ENCODE measurements at regions of chr6 and their contacts with region 1.

Region 1: GRCh38 chr6:124870611-124871459 is 91.4 kb upstream of the RNF217 start:
- ATAC-seq: no peak
- H3K4me3 ChIP-seq: no peak overlapping the region
- H3K27ac ChIP-seq: no peak overlapping the region
- H3K4me1 ChIP-seq: no peaks in the 10 kb centered on the region

Region 2: DNA sequence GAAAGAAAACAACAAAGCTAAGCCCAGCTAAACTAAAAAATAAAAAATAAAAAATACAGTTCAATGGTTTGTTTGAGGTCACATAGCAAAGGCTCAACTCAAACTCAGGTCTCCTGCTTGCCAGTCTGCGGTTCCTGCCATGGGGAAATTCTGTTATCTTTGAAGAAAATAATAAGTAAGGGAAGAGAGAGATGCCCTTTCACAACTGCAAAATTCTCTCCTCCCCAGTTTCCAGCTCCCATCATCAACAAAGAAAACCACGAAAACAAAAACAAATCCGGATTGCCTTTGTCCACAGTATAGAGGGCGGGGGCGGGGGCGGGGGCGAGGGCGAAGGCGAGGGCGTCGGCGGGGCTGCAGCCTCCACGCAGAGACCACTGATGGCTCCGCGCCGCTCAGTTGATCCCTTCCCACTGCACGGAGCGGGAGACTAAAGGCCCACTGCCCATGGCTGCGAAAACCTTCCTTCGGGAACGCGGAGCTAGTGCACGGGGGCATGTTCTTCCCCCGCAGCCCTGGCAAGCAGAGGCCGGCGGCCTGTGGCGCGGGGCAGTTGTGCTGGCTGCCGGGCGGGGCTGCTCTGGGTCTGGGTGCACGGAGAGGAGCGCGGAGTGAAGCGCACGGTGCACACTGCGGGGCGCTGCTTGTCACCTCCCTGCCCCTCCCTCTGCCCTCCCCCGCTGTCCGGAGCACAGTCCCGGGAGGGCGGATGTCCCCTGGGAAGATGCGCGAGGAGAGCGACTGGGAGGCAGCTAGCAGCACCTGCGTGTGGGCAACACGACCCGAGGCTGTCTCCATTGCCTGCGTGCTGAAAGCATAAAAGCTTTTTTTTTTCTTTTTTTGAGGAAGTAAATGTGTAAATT is 228.6 kb after region 1 on chr6:
- in situ Hi-C with region 1: loop called in 2 of 9 experiments (anchors 25 kb)
- ATAC-seq: peak; percentile 73 to 99 (median 96)
- H3K4me3 ChIP-seq: peak overlapping the region; percentile 35 to 54 (median 36)
- H3K27ac ChIP-seq: no peak overlapping the region
- H3K4me1 ChIP-seq: peaks cover 8% of the 10 kb centered on the region in 2 donors

Region 3: GRCh38 chr6:125114248-125114858 is 243.5 kb after region 1 on chr6:
- in situ Hi-C with region 1: loop called in 6 of 9 experiments (anchors 5 to 25 kb)
- ATAC-seq: no peak
- H3K4me3 ChIP-seq: no peak overlapping the region
- H3K27ac ChIP-seq: no peak overlapping the region
- H3K4me1 ChIP-seq: peaks cover 0 to 8% of the 10 kb centered on the region in 2 donors

Region 4: DNA sequence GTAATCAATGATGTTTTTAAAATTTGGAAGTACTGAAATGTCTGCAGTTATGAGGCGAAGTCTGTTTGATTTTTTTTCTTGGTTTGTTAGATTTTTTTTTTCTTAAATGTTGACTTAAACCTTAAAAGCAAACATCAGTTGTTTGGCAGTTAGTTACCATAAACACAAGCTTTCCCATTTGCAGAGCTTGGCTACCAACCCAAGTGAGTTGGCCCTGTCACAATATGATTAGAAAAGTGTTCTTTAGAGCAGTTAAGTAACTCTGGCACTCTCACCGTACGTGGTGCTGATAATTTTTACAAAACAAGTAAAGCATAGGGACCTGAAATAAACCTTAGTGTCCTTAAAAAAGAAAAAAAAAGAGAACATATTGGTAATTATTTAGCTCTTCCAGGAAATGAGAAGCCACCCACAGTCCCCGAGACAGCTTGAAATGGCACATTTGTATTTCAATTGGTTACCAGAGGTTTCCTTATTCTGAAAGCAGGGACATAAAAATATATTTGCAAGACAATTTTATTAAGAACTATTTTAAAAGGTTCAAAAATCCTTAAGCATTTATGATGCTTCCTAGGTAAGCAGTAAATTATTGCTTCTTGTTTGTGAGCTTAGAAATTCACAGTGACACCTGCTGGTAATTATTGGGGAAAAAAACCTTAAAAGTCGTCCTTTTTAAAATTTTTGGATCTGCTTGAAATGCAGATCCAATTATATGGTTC is 882.5 kb after region 1 on chr6:
- in situ Hi-C with region 1: loop called in 2 of 9 experiments (anchors 25 kb)
- ATAC-seq: no peak
- H3K4me3 ChIP-seq: no peak overlapping the region
- H3K27ac ChIP-seq: no peak overlapping the region
- H3K4me1 ChIP-seq: peaks cover 8 to 15% of the 10 kb centered on the region in 2 donors